ENCODE measurements at regions of chr2 and their contacts with region 1.

Region 1: DNA sequence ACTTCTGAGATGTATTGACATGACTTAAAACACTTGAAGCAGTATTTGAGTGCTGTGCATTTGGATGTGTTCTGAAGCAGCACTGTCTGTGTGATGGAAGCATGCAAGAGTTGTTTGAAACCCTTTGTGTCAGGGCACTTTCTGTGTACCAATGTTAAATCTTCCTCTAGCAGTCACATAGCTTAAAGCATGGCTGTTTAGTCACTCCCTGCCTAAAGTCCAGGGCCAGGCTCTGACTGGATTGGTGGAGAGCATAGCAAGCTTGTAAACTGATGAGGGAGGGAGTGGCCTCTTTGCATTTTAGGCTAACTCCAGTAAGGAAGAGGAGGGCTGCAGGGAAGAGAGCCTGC is 73.5 kb downstream of the MYO1B start:
- DNase-seq: peak; percentile 85 to 92
- H3K4me3 ChIP-seq: no peak overlapping the region
- H3K4me3 Mint-ChIP-seq: peak overlapping the region; percentile 60
- H3K27ac Mint-ChIP-seq: peak overlapping the region; percentile 78
- H3K4me1 ChIP-seq: peaks cover 48% of the 10 kb centered on the region
- H3K4me1 Mint-ChIP-seq: peaks cover 35% of the 10 kb centered on the region
- H3K27me3 ChIP-seq: no peaks in the 10 kb centered on the region
- H3K27me3 Mint-ChIP-seq: no peaks in the 10 kb centered on the region
- CTCF ChIP-seq: no peak

Region 2: GRCh38 chr2:191051825-191052778 is 266.6 kb before region 1 on chr2:
- CTCF ChIA-PET with region 1: no interaction called
- POLR2A ChIA-PET with region 1: no interaction called
- intact Hi-C with region 1: loop called (anchors 5 kb)
- DNase-seq: peak in 1 of 2 experiments; percentile 44
- H3K4me3 ChIP-seq: no peak overlapping the region
- H3K4me3 Mint-ChIP-seq: no peak overlapping the region
- H3K27ac Mint-ChIP-seq: no peak overlapping the region
- H3K4me1 ChIP-seq: peaks cover 14% of the 10 kb centered on the region
- H3K4me1 Mint-ChIP-seq: no peaks in the 10 kb centered on the region
- H3K27me3 ChIP-seq: no peaks in the 10 kb centered on the region
- H3K27me3 Mint-ChIP-seq: peaks cover 6% of the 10 kb centered on the region
- CTCF ChIP-seq: peak; percentile 61

Region 3: GRCh38 chr2:191302459-191303139 is 16.1 kb before region 1 on chr2:
- CTCF ChIA-PET with region 1: interaction called, 14 read pairs
- POLR2A ChIA-PET with region 1: interaction called, 4 read pairs
- intact Hi-C with region 1: loop called (anchors 2 kb)
- DNase-seq: peak; percentile 56 to 59
- H3K4me3 ChIP-seq: no peak overlapping the region
- H3K4me3 Mint-ChIP-seq: no peak overlapping the region
- H3K27ac Mint-ChIP-seq: peak overlapping the region; percentile 18
- H3K4me1 ChIP-seq: peaks cover 26% of the 10 kb centered on the region
- H3K4me1 Mint-ChIP-seq: peaks cover 37% of the 10 kb centered on the region
- H3K27me3 ChIP-seq: no peaks in the 10 kb centered on the region
- H3K27me3 Mint-ChIP-seq: no peaks in the 10 kb centered on the region
- CTCF ChIP-seq: peak; percentile 58 to 65

Region 4: DNA sequence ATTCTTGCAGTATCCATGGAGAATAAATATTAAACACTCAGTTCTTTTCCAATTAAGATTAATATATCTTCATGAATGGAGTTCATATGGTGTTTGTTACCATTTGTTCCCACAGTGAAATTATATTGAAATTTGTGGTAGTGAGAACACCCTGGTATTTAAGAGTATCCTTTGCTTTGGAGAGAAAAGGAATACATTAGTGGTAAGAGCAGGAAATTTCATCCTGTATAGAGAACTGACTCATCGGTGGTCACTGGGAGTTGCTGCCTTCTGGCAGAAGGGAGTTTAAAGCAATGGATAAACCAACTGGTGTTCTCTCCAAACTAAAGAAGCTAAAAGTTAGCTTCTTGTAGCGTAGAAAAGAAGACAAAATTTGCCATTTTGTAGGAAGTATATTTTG is 33.8 kb after region 1 on chr2:
- CTCF ChIA-PET with region 1: no interaction called
- POLR2A ChIA-PET with region 1: no interaction called
- intact Hi-C with region 1: loop called (anchors 2 kb)
- DNase-seq: no peak
- H3K4me3 ChIP-seq: no peak overlapping the region
- H3K4me3 Mint-ChIP-seq: no peak overlapping the region
- H3K27ac Mint-ChIP-seq: no peak overlapping the region
- H3K4me1 ChIP-seq: no peaks in the 10 kb centered on the region
- H3K4me1 Mint-ChIP-seq: no peaks in the 10 kb centered on the region
- H3K27me3 ChIP-seq: no peaks in the 10 kb centered on the region
- H3K27me3 Mint-ChIP-seq: no peaks in the 10 kb centered on the region
- CTCF ChIP-seq: no peak

Region 5: DNA sequence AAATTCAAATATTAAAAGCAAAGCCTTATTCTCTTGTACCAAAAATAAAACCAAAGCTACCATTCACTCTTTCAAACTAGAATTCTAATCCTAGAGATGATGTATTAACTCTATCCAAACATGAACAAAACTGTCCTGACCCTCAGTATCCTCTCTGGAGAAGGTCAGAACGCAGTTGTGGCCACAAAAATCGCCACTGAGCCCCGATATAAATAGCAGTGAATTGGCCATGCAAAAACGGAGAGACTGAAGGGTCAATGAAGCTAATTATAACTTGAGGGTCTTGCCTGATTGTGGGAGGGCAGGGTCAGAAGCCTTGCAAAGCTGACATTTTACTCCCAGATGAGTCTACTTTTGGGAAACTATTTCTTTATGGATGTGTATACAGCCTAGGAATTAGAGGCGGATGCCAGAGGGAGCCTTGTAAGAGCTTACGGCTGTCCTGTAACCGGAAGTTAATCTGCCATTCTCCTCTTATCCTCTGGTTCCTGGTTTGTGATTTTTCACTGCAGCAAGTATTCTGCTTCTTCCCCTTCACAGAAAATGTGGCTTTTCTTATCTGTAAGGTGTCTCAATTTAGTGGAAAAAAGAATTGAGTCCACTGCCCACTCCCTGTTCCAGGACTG is 500.1 kb after region 1 on chr2:
- CTCF ChIA-PET with region 1: no interaction called
- POLR2A ChIA-PET with region 1: no interaction called
- intact Hi-C with region 1: no loop called
- DNase-seq: no peak
- H3K4me3 ChIP-seq: no peak overlapping the region
- H3K4me3 Mint-ChIP-seq: no peak overlapping the region
- H3K27ac Mint-ChIP-seq: no peak overlapping the region
- H3K4me1 ChIP-seq: no peaks in the 10 kb centered on the region
- H3K4me1 Mint-ChIP-seq: no peaks in the 10 kb centered on the region
- H3K27me3 ChIP-seq: no peaks in the 10 kb centered on the region
- H3K27me3 Mint-ChIP-seq: peaks cover 18% of the 10 kb centered on the region
- CTCF ChIP-seq: no peak

Measured in Caco-2 (cell line).